ENCODE measurements at regions of chr11 and their contacts with region 1.

Region 1: DNA sequence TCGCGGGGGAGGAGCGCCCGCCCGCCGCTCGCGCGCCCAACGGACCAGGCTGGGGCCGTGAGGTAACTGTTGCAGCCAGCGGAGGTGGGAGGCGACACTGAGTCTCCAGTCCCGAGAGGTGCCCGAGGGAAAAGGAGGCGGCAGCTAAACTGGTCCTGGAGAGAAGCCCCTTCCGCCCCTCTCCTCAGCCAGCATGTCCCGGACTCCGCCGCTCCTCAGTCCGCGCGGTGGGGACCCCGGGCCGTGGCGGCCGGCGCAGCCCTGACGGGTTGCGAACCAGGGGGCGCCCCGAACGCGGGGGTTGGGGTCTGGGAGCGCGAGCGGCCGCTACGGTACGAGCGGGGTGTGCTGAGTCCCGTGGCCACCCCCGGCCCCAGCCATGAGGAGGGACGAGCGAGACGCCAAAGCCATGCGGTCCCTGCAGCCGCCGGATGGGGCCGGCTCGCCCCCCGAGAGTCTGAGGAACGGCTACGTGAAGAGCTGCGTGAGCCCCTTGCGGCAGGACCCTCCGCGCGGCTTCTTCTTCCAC is at the start of gene PDE3B:
- DNase-seq: peak; percentile 95
- H3K4me3 ChIP-seq: peak within 1 kb of the TSS; percentile 53 to 90 (median 76)
- H3K27ac ChIP-seq: peak within 1 kb of the TSS; percentile 85 to 96 (median 94)
- H3K4me1 ChIP-seq: peaks cover 9 to 73% (median 29%) of the 10 kb centered on the region in 6 donors
- H3K27me3 ChIP-seq: peaks cover 0 to 55% (median 22%) of the 10 kb centered on the region in 7 donors
- CTCF ChIP-seq: peak in 1 of 11 experiments; percentile 20
- POLR2A ChIP-seq: peak; percentile 2 to 81 (median 33)
- total RNA-seq, gene PDE3B: 19.8 to 78.7 (median 40.0) TPM

Region 2: GRCh38 chr11:13685461-13686108 is 958.2 kb before region 1 on chr11:
- intact Hi-C with region 1: no loop called
- DNase-seq: no peak
- H3K4me3 ChIP-seq: no peak overlapping the region
- H3K27ac ChIP-seq: peak overlapping the region in 1 of 8 donors; percentile 14
- H3K4me1 ChIP-seq: peaks cover 3 to 66% (median 23%) of the 10 kb centered on the region in 6 donors
- H3K27me3 ChIP-seq: no peaks in the 10 kb centered on the region
- CTCF ChIP-seq: no peak
- POLR2A ChIP-seq: no peak

Region 3: GRCh38 chr11:14537134-14537599 is 106.6 kb before region 1 on chr11:
- intact Hi-C with region 1: loop called (anchors 5 kb)
- DNase-seq: no peak
- H3K4me3 ChIP-seq: peak overlapping the region in 2 of 8 donors; percentile 11 to 48
- H3K27ac ChIP-seq: peak overlapping the region in 6 of 8 donors; percentile 14 to 72 (median 52)
- H3K4me1 ChIP-seq: peaks cover 6 to 53% (median 32%) of the 10 kb centered on the region in 6 donors
- H3K27me3 ChIP-seq: no peaks in the 10 kb centered on the region
- CTCF ChIP-seq: peak; percentile 57 to 87 (median 80)
- POLR2A ChIP-seq: no peak